PC-3 (cell line): ENCODE measurements at regions of chr12 and their contacts with region 1.

Region 1: GRCh38 chr12:98123021-98123797 is 392.2 kb upstream of the TMPO start:
- DNase-seq: no peak
- ATAC-seq: no peak
- H3K4me3 ChIP-seq: no peak overlapping the region
- H3K27ac ChIP-seq: no peak overlapping the region
- H3K4me1 ChIP-seq: no peaks in the 10 kb centered on the region
- H3K27me3 ChIP-seq: peaks cover 24% of the 10 kb centered on the region; the same call in 1 of the 2 replicates
- CTCF ChIP-seq: no peak

Region 2: DNA sequence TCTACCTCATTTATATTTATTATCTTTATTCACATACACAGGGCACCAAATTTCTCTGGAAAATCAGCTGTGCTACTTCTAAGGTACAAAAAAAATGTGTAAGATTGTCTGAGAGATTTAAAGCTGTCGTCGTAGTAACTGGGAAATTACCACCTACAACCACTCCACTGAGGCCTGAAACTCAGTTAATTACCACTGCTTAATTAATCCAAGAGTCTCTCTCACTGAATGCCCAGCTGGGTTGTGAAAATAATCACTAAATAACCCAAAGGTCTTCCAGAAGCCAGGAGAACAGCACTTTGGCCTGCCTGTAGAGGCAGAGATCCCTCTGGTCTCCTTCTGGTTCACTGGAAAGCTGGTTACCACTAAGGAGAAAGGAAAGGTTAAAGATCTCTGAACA is 184.9 kb after region 1 on chr12:
- CTCF ChIA-PET with region 1: no interaction called
- POLR2A ChIA-PET with region 1: interaction called, 11 read pairs
- intact Hi-C with region 1: no loop called
- DNase-seq: no peak
- ATAC-seq: no peak
- H3K4me3 ChIP-seq: no peak overlapping the region
- H3K27ac ChIP-seq: no peak overlapping the region
- H3K4me1 ChIP-seq: no peaks in the 10 kb centered on the region
- H3K27me3 ChIP-seq: peaks cover 16% of the 10 kb centered on the region; the same call in 1 of the 2 replicates
- CTCF ChIP-seq: no peak

Region 3: GRCh38 chr12:98319716-98320425 is 196.7 kb after region 1 on chr12:
- CTCF ChIA-PET with region 1: no interaction called
- POLR2A ChIA-PET with region 1: no interaction called
- intact Hi-C with region 1: no loop called
- DNase-seq: no peak
- ATAC-seq: peak; percentile 53
- H3K4me3 ChIP-seq: no peak overlapping the region
- H3K27ac ChIP-seq: no peak overlapping the region
- H3K4me1 ChIP-seq: no peaks in the 10 kb centered on the region
- H3K27me3 ChIP-seq: peaks cover 10% of the 10 kb centered on the region
- CTCF ChIP-seq: no peak